ENCODE measurements at regions of chr16 and their contacts with region 1.

Region 1: DNA sequence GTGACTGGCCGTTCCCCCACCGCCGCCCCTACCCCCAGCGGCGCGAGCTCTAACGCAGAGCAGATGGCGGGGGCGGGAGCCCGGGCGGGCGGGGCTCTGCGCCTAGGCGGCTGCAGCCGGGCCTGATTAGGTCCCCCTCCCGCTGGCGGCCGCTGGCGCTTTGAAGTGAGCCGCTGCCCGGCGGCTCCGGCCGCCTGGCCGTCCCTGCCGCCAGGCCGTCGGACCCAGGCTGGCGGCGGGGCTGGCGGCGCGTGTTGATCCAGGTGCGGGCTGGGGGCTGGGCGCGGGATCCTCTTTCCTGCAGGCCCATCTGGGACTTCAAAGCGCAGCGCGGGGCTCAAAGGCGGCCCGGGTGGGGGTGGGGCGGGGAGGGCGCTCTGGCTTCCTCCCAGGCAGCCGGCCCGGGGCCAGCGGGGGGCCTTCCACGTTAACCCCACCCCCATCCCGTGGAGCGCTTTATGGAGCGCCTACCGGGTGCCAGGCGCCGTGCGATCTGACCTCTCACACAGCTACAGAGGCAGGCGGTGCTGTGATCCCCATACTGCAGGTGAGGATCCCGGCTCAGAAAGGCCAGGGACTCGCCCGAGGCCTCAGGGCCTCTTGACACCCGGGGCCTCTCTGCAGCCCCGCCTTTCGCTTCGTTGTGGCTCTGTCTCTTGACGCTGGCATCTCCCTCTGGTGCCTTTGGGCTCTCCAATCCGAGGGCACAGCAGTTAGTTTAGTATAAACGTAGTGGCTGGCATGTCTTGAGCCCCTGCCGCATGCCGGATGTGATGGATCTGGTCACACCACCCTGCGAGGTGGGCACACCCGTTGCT is 80.0 kb upstream of the NKD1 start:
- DNase-seq: peak; percentile 62
- H3K4me3 ChIP-seq: peak overlapping the region; percentile 16 to 53 (median 47)
- H3K27ac ChIP-seq: peak overlapping the region in 2 of 4 donors; percentile 26 to 46
- H3K4me1 ChIP-seq: peaks cover 0 to 11% (median 9%) of the 10 kb centered on the region in 4 donors
- H3K27me3 ChIP-seq: peaks cover 3 to 11% (median 4%) of the 10 kb centered on the region in 3 donors
- CTCF ChIP-seq: no peak
- EP300 ChIP-seq: no peak
- POLR2A ChIP-seq: no peak

Region 2: DNA sequence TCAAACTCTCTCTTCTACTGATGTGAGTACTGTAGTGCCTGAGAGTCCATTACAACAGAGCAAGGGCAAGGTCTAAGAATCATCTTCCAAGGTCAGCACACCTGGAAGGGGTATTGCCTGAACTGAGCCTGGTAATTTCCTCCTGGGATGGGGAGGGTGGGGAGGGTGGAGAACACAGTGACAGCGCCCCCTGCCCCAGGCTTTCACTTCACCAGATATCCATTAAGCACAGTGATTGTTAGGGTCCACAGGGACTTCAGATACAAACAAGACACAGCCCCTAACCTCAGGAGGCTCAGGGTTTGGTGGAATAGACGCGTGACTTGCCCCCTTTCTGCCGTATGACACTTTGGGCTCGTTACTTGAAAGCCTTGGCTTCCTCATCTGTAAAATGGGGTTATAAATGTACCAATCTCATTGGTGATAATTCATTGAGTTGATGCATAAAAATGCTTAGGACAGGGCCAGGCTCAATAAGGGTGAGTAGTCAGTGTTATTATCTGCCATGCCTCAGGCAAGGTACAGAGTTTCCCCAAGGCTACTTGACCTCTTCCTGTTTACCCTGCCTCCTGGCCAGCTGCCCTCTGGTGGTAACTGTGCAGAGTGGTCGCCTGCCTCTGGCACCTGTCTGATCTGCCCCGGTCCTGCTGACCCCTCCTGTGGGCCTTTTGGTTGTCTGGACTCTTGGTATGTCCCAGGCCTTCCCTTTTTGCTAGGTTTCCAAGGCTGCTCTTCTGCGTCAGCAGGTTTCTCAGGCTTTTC is 86.3 kb before region 1 on chr16:
- intact Hi-C with region 1: loop called (anchors 5 kb)
- DNase-seq: no peak
- H3K4me3 ChIP-seq: no peak overlapping the region
- H3K27ac ChIP-seq: no peak overlapping the region
- H3K4me1 ChIP-seq: no peaks in the 10 kb centered on the region
- H3K27me3 ChIP-seq: no peaks in the 10 kb centered on the region
- CTCF ChIP-seq: no peak
- EP300 ChIP-seq: no peak
- POLR2A ChIP-seq: no peak

Region 3: DNA sequence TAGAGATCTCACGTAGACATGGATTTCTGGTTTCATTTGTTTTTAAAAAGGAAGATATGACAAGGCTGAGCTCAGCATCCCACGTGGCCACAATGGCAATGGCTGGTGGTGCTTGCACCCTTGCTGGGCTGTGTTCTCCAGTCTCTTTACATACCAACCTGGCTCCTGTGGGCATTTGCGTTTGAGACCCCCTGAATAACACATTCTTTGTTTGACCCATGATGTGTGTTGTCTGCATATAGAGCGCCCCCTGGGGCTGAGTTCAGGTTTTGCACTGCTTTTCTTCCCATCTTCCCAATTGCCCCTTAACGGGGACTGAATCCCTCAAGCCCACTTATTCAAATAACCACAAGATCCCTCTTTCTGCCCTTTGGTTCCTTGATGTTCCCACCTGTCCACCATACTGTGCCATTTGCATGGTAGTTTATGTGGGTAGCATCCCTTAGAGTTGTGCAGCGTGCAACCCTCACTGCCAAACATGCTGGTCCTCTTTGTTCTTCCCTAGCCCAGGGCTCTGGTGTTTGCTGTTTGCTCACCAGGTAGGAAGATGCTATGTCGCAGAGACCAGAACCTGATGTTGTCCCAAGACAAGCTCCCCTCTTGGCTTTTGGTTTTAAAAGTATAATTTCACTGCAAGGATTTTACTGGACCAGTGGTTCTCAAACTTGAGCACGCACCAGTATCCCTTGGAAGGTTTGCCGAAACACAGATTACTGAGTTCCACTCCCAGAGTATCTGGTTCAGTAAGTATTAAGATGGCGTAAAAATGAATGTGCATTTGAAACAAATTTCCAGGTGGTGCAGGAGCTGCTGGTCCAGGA is 41.6 kb after region 1 on chr16:
- intact Hi-C with region 1: no loop called
- DNase-seq: no peak
- H3K4me3 ChIP-seq: no peak overlapping the region
- H3K27ac ChIP-seq: no peak overlapping the region
- H3K4me1 ChIP-seq: no peaks in the 10 kb centered on the region
- H3K27me3 ChIP-seq: no peaks in the 10 kb centered on the region
- CTCF ChIP-seq: no peak
- EP300 ChIP-seq: no peak
- POLR2A ChIP-seq: no peak